RWPE1 (cell line): ENCODE measurements at regions of chr21 and their contacts with region 1.

Region 1: GRCh38 chr21:36113647-36114428 is 21.0 kb upstream of the CBR3 start:
- DNase-seq: no peak
- H3K27ac ChIP-seq: no peak overlapping the region; the same call in 1 of the 2 replicates
- CTCF ChIP-seq: no peak

Region 2: GRCh38 chr21:36069713-36070573 is 43.9 kb before region 1 on chr21 and contains the start of gene CBR1:
- CTCF ChIA-PET with region 1: interaction called, 17 read pairs
- POLR2A ChIA-PET with region 1: no interaction called
- DNase-seq: peak; percentile 86
- H3K27ac ChIP-seq: peak within 1 kb of the TSS; percentile 84
- CTCF ChIP-seq: no peak

Region 3: GRCh38 chr21:36310016-36310415 is 196.2 kb after region 1 on chr21:
- CTCF ChIA-PET with region 1: no interaction called
- POLR2A ChIA-PET with region 1: no interaction called
- DNase-seq: no peak
- H3K27ac ChIP-seq: no peak overlapping the region
- CTCF ChIP-seq: no peak